Thyroid gland (tissue), 4 donors: ENCODE measurements at regions of chr3 and their contacts with region 1.

Region 1: GRCh38 chr3:141875374-141875892 is 1.0 kb upstream of the ATP1B3 start:
- DNase-seq: peak; percentile 85 to 87
- H3K4me3 ChIP-seq: peak overlapping the region; percentile 32 to 67 (median 63)
- H3K27ac ChIP-seq: peak overlapping the region; percentile 95 to 100 (median 100)
- H3K4me1 ChIP-seq: peaks cover 10 to 17% of the 10 kb centered on the region in 2 donors
- H3K27me3 ChIP-seq: no peaks in the 10 kb centered on the region
- CTCF ChIP-seq: peak; percentile 50 to 94 (median 78)
- POLR2A ChIP-seq: peak; percentile 36 to 82

Region 2: GRCh38 chr3:141738022-141738890 is 137.2 kb before region 1 on chr3 and contains the start of gene RNF7:
- intact Hi-C with region 1: loop called (anchors 5 kb)
- DNase-seq: peak; percentile 94
- H3K4me3 ChIP-seq: peak within 1 kb of the TSS; percentile 92 to 96 (median 95)
- H3K27ac ChIP-seq: peak within 1 kb of the TSS; percentile 96 to 97 (median 97)
- H3K4me1 ChIP-seq: peaks cover 20 to 24% of the 10 kb centered on the region in 2 donors
- H3K27me3 ChIP-seq: no peaks in the 10 kb centered on the region
- CTCF ChIP-seq: peak; percentile 63 to 99 (median 92)
- POLR2A ChIP-seq: peak in 1 of 2 donors; percentile 90
- total RNA-seq, gene RNF7: 56.5 to 114 (median 79.1) TPM

Region 3: GRCh38 chr3:141796081-141796888 is 79.1 kb before region 1 on chr3:
- intact Hi-C with region 1: loop called (anchors 10 kb)
- DNase-seq: peak; percentile 95 to 96
- H3K4me3 ChIP-seq: no peak overlapping the region
- H3K27ac ChIP-seq: peak overlapping the region; percentile 83 to 96 (median 92)
- H3K4me1 ChIP-seq: peaks cover 28 to 30% of the 10 kb centered on the region in 2 donors
- H3K27me3 ChIP-seq: no peaks in the 10 kb centered on the region
- CTCF ChIP-seq: peak in 1 of 6 experiments; percentile 2
- POLR2A ChIP-seq: peak in 1 of 2 donors; percentile 63